Activated CD4-positive, alpha-beta memory T cell treated with anti-CD3 and anti-CD28 coated beads for 36 hours (primary cell): ENCODE measurements at regions of chr21 and their contacts with region 1.

Region 1: DNA sequence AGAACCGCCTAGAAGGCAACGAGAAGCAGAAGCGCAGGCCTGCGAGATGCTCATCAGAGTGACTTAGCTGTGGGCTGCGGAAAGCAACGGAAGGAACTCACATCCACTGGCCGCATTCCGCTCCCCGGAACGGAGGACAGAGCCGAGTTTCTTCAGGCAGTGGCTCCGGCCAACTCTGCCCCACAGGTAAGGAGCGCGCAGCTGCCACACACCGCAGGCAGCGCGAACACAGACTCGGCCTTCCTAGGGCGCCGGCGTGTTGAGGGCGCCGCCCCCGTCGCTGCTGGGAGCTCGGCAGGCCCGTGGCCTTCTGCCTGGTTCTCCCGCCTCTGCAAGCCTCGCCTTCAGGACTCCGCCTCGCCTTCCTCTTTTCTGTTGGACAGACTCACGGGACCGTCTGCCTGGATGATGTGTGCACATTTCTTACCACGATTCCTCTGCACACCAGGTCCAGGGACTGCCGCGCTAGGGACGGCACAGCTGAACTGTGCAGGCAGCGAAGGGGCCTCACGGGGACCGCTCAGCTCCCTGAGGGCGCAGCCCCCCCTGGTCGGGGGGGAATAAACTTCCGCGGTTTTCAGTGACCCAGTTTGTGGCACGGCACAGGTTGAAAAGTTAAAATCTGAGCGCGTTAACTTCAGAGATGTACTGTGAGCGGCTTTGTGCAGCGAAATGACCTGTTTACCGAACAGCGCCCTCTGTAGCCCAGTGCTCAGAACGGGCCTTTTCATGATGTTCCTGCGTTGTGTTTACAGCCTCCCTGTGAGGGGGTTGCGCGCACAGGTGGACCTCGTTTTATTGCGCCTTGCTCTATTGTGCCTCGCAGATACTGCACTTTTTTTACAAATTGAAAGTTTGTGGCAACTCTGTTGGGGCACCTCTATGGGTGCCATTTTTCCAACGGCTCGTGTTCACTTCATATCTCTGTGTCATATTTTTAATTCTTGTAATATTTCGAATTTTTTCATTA is 15.8 kb downstream of the TCP10L start:
- DNase-seq: peak; percentile 88
- H3K4me3 Mint-ChIP-seq: peak overlapping the region; percentile 80
- H3K27ac Mint-ChIP-seq: peak overlapping the region; percentile 66
- H3K4me1 Mint-ChIP-seq: peaks cover 16% of the 10 kb centered on the region
- H3K27me3 Mint-ChIP-seq: no peaks in the 10 kb centered on the region

Region 2: GRCh38 chr21:32392880-32393676 is 176.5 kb before region 1 on chr21 and contains the start of gene URB1:
- CTCF ChIA-PET with region 1: interaction called, 13 read pairs
- POLR2A ChIA-PET with region 1: interaction called, 3 read pairs
- intact Hi-C with region 1: no loop called
- DNase-seq: peak; percentile 96
- H3K4me3 Mint-ChIP-seq: peak within 1 kb of the TSS; percentile 80
- H3K27ac Mint-ChIP-seq: peak within 1 kb of the TSS; percentile 51
- H3K4me1 Mint-ChIP-seq: peaks cover 43% of the 10 kb centered on the region
- H3K27me3 Mint-ChIP-seq: peaks cover 2% of the 10 kb centered on the region
- total RNA-seq, gene URB1: 21.5 to 23.4 TPM

Region 3: GRCh38 chr21:32403201-32403777 is 166.3 kb before region 1 on chr21:
- CTCF ChIA-PET with region 1: interaction called, 43 read pairs
- POLR2A ChIA-PET with region 1: interaction called, 3 read pairs
- intact Hi-C with region 1: loop called (anchors 1 kb)
- DNase-seq: peak; percentile 66
- H3K4me3 Mint-ChIP-seq: no peak overlapping the region
- H3K27ac Mint-ChIP-seq: no peak overlapping the region
- H3K4me1 Mint-ChIP-seq: peaks cover 6% of the 10 kb centered on the region
- H3K27me3 Mint-ChIP-seq: no peaks in the 10 kb centered on the region

Region 4: GRCh38 chr21:32412162-32413014 is 157.2 kb before region 1 on chr21 and contains the start of gene EVA1C:
- CTCF ChIA-PET with region 1: interaction called, 14 read pairs
- POLR2A ChIA-PET with region 1: interaction called, 8 read pairs
- intact Hi-C with region 1: loop called (anchors 1 kb)
- DNase-seq: peak; percentile 76
- H3K4me3 Mint-ChIP-seq: peak within 1 kb of the TSS; percentile 91
- H3K27ac Mint-ChIP-seq: peak within 1 kb of the TSS; percentile 89
- H3K4me1 Mint-ChIP-seq: peaks cover 33% of the 10 kb centered on the region
- H3K27me3 Mint-ChIP-seq: no peaks in the 10 kb centered on the region
- total RNA-seq, gene EVA1C: 9.3 to 9.6 TPM

Region 5: DNA sequence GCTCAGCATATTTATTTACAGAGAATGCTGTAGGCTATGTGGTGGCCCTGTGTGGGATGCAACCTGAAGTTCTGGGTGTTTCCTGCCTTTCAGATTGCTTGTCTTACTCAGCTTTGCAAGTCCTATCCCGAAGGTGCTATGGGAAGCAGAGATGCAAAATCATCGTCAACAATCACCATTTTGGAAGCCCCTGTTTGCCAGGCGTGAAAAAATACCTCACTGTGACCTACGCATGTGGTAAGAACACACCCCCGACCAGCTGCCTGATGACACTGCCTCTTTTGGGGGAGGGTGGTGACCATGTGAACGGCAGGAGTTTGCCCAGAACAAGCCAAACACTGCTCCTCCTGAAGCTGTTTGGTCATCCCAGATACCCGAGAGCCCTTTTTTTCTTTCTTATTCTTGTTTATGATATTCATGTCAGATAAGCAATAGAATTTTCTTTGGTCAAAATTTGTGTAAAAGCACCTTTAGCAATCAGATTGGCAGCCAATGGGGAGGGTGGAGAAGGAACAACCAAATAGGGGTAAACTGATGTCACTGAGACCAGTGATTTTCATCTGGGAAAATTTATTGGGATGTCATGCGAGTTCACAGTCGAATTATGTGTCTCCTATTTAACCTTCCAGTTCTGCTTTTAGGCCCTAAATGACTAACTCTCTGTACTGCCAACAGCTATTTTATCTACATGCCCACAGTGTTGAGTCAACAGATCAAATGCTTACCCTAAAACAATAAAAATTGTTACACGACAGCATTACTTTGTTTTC is 74.4 kb before region 1 on chr21:
- CTCF ChIA-PET with region 1: interaction called, 5 read pairs
- POLR2A ChIA-PET with region 1: no interaction called
- intact Hi-C with region 1: loop called (anchors 5 kb)
- DNase-seq: no peak
- H3K4me3 Mint-ChIP-seq: no peak overlapping the region
- H3K27ac Mint-ChIP-seq: no peak overlapping the region
- H3K4me1 Mint-ChIP-seq: no peaks in the 10 kb centered on the region
- H3K27me3 Mint-ChIP-seq: no peaks in the 10 kb centered on the region

Region 6: GRCh38 chr21:32520875-32521735 is 48.4 kb before region 1 on chr21:
- CTCF ChIA-PET with region 1: no interaction called
- POLR2A ChIA-PET with region 1: no interaction called
- intact Hi-C with region 1: no loop called
- DNase-seq: no peak
- H3K4me3 Mint-ChIP-seq: no peak overlapping the region
- H3K27ac Mint-ChIP-seq: no peak overlapping the region
- H3K4me1 Mint-ChIP-seq: no peaks in the 10 kb centered on the region
- H3K27me3 Mint-ChIP-seq: no peaks in the 10 kb centered on the region

Region 7: DNA sequence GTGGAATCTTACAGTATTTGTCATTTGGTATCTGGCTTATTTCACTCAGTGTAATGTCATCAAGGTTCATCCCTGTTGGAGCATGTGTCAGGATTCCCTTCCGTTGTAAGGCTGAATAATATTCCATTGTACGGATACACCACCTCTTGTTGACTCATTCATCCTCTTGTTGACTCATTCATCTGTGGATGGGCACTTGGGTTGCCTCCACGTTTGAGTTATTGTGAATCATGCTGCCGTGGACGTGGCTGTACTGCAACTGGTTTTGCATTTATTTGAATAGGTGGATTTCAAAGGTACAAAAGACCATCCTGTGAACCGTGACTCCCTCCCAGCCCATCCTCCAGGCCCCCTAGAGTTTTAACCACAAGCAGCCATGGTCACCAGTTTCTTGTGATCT is 27.7 kb after region 1 on chr21:
- CTCF ChIA-PET with region 1: interaction called, 12 read pairs
- POLR2A ChIA-PET with region 1: no interaction called
- intact Hi-C with region 1: loop called (anchors 5 kb)
- DNase-seq: no peak
- H3K4me3 Mint-ChIP-seq: no peak overlapping the region
- H3K27ac Mint-ChIP-seq: no peak overlapping the region
- H3K4me1 Mint-ChIP-seq: peaks cover 2% of the 10 kb centered on the region
- H3K27me3 Mint-ChIP-seq: no peaks in the 10 kb centered on the region

Region 8: DNA sequence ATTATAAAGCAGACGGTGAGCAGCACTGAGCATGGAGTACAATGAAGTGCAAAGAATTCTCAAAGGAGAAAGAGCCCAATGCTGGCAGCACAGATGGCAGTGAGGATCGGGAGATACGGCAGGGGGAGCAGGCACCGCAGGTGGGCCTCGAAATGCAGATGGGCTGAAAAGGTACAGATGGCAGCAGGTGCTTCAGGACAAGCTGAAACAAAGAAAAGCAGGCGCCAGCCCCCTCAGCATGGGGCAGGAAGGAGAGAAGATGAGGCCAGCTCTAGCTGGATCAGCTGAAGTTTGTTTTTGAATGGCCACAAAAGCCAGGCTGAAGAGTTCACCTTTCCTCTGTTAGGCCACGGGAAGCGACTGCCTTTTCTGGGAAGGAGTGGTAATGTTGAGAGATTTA is 34.9 kb after region 1 on chr21:
- CTCF ChIA-PET with region 1: interaction called, 12 read pairs
- POLR2A ChIA-PET with region 1: no interaction called
- intact Hi-C with region 1: loop called (anchors 5 kb)
- DNase-seq: no peak
- H3K4me3 Mint-ChIP-seq: no peak overlapping the region
- H3K27ac Mint-ChIP-seq: no peak overlapping the region
- H3K4me1 Mint-ChIP-seq: peaks cover 3% of the 10 kb centered on the region
- H3K27me3 Mint-ChIP-seq: no peaks in the 10 kb centered on the region

Region 9: DNA sequence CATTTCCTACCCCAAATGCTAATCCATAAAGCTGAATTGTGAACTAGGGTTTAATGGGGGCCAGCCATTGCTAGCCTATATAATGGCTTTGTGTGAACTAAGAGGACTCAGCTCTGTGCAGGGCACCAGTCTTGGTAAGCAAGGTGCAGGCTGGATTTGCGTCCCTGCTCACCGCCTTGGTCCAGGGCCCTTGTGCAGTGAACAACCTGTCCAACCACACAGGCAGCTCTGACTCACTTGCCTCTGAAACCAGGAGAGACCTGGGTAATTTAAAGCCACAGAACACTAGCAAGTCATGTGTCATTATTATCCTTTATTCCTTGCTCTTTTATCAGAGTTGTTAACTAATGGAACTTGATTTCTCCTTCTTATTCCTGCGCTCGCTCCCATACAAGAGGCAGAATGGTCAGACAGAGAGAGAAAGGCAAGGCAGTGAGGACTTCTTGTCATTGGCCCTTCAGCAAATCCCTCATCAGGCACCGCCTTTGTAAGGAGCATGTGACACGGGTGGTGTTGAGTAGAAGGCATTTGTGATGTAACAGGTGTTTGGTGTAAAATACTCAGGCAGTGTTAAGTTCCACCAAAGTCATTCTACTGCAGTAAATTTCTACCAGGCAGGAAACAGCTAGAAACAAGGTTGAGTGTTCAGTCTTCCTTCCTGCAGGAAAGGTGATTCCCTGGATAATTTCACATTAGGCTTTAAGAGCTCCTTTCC is 388.9 kb after region 1 on chr21:
- CTCF ChIA-PET with region 1: no interaction called
- POLR2A ChIA-PET with region 1: no interaction called
- intact Hi-C with region 1: no loop called
- DNase-seq: no peak
- H3K4me3 Mint-ChIP-seq: no peak overlapping the region
- H3K27ac Mint-ChIP-seq: no peak overlapping the region
- H3K4me1 Mint-ChIP-seq: no peaks in the 10 kb centered on the region
- H3K27me3 Mint-ChIP-seq: peaks cover 46% of the 10 kb centered on the region